ENCODE measurements at regions of chr3 and their contacts with region 1.

Region 1: GRCh38 chr3:13391308-13391707 is 28.8 kb downstream of the NUP210 start:
- DNase-seq: no peak
- ATAC-seq: no peak
- H3K4me3 ChIP-seq: no peak overlapping the region
- H3K27ac ChIP-seq: no peak overlapping the region
- H3K4me1 ChIP-seq: peaks cover 46% of the 10 kb centered on the region
- H3K27me3 ChIP-seq: no peaks in the 10 kb centered on the region
- CTCF ChIP-seq: peak; percentile 30
- EP300 ChIP-seq: no peak
- POLR2A ChIP-seq: no peak
- RAD21 ChIP-seq: no peak

Region 2: DNA sequence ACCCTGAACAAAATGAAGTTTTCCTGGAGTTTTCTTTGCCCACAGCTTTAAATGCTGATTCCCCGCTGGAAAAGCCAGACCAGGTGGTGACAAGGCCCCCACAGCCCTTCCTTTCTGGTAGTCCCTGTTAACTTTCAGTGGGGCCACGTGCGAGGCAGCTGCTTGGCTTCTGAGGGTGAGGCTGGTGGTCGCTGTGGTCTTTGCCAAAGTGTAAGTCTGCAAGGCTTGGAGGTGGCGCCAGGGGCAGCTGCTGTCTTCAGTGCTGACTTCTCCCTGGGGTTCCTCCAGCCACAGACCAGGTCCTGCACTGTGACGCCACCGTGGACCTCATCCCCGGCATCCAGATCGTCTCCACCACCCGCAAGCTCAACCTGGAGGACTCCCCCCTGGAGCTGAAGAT is 1490.5 kb before region 1 on chr3:
- CTCF ChIA-PET with region 1: no interaction called
- POLR2A ChIA-PET with region 1: no interaction called
- in situ Hi-C with region 1: loop called (anchors 5 kb)
- intact Hi-C with region 1: no loop called
- DNase-seq: no peak
- ATAC-seq: no peak
- H3K4me3 ChIP-seq: no peak overlapping the region
- H3K27ac ChIP-seq: no peak overlapping the region
- H3K4me1 ChIP-seq: no peaks in the 10 kb centered on the region
- H3K27me3 ChIP-seq: peaks cover 0 to 13% of the 10 kb centered on the region in 2 experiments; a peak in 2 of 5 replicates
- CTCF ChIP-seq: no peak
- EP300 ChIP-seq: no peak
- POLR2A ChIP-seq: no peak
- RAD21 ChIP-seq: no peak

Measured in HepG2 (cell line).